ENCODE measurements at regions of chr22 and their contacts with region 1.

Region 1: DNA sequence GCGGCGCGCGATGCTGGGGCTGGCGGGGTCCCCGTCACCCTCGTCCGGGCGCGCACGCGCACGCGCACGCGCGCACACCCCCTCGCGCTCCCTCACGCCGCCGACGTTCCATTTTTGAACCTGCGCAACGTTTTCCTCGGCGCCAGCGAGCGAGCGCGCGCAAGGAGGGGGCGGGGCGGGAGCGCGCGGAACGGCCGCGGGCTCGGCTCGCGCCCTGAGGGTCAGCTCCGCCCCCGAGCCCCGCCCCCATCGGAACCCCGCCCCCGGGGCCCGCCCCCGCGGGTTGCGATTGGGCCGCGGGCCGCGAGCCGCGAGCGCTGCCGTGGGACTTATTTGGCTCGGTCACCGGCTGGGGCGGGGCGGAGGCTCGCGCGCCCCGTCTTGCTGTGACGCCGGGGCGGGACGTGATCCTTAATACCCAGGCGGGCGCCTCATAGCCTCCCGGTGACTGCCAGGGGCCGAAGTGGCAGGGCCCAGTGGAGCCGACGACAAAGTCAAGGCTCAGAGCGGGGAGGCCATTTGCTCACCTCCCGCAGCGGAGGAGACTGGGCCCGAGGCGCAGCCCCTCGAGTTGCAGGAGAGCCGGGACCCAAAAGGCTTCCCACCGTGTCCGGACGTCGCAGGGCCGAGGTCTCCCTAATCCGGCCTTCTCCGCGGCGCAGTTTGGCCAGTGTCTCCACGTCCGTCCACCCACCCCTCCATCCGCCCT is at the start of gene CBX7:
- DNase-seq: peak; percentile 78 to 81
- ATAC-seq: peak; percentile 82 to 88
- H3K4me3 ChIP-seq: peak within 1 kb of the TSS; percentile 51
- H3K27ac ChIP-seq: peak within 1 kb of the TSS; percentile 71 to 90
- H3K4me1 ChIP-seq: peaks cover 10% of the 10 kb centered on the region; the same call in 1 of the 3 replicates
- CTCF ChIP-seq: no peak
- EP300 ChIP-seq: no peak
- POLR2A ChIP-seq: no peak
- RAD21 ChIP-seq: no peak
- polyA plus RNA-seq, gene CBX7: 0.79 and 1.3 TPM in 2 replicates

Region 2: DNA sequence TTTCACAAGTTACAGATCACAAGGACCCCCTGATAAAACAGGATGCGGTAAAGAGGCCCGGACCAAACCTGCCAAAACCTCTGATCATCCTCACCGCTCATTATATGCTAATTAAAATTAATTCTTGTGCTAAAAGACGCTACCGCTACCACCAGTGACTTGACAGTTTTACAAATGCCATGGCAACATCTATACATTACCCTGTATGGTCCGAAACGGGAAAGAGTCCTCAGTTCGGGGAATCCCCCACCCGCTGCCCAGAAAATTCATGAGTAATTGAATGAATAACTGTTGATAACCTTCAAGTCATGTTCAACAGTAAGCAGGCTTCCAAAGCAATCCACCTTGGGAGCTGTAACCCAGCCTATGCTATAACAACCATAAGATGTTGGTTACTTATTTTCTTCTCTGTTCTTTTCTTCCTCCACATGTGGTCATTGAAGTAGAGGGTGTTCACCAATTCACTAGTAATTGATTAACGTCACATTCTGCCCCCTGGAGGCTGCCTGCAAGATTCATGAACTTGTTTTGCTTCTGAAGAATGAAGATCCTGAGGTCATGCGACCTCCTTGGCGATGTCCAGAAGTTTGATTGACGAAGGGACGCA is 35.0 kb before region 1 on chr22:
- CTCF ChIA-PET with region 1: no interaction called
- POLR2A ChIA-PET with region 1: no interaction called
- DNase-seq: peak; percentile 36 to 55
- ATAC-seq: peak in 1 of 2 experiments; percentile 61; a peak in 3 of 6 replicates
- H3K4me3 ChIP-seq: no peak overlapping the region
- H3K27ac ChIP-seq: no peak overlapping the region
- H3K4me1 ChIP-seq: peaks cover 2% of the 10 kb centered on the region; the same call in 1 of the 3 replicates
- CTCF ChIP-seq: peak; percentile 36
- EP300 ChIP-seq: no peak
- POLR2A ChIP-seq: no peak
- RAD21 ChIP-seq: peak; percentile 22 to 29; a peak in 2 of 5 replicates

Region 3: GRCh38 chr22:39135090-39135896 is 17.4 kb before region 1 on chr22:
- CTCF ChIA-PET with region 1: interaction called, 21 read pairs
- POLR2A ChIA-PET with region 1: no interaction called
- DNase-seq: peak; percentile 49 to 68
- ATAC-seq: peak; percentile 94 to 96
- H3K4me3 ChIP-seq: no peak overlapping the region
- H3K27ac ChIP-seq: no peak overlapping the region
- H3K4me1 ChIP-seq: 0 out of 3 replicates have a peak, but pooled peaks cover 9% of the 10 kb centered on the region
- CTCF ChIP-seq: peak; percentile 47
- EP300 ChIP-seq: no peak
- POLR2A ChIP-seq: no peak
- RAD21 ChIP-seq: peak; percentile 61 to 72

Measured in A549 (cell line).